ENCODE measurements at regions of chr1 and their contacts with region 1.

Region 1: DNA sequence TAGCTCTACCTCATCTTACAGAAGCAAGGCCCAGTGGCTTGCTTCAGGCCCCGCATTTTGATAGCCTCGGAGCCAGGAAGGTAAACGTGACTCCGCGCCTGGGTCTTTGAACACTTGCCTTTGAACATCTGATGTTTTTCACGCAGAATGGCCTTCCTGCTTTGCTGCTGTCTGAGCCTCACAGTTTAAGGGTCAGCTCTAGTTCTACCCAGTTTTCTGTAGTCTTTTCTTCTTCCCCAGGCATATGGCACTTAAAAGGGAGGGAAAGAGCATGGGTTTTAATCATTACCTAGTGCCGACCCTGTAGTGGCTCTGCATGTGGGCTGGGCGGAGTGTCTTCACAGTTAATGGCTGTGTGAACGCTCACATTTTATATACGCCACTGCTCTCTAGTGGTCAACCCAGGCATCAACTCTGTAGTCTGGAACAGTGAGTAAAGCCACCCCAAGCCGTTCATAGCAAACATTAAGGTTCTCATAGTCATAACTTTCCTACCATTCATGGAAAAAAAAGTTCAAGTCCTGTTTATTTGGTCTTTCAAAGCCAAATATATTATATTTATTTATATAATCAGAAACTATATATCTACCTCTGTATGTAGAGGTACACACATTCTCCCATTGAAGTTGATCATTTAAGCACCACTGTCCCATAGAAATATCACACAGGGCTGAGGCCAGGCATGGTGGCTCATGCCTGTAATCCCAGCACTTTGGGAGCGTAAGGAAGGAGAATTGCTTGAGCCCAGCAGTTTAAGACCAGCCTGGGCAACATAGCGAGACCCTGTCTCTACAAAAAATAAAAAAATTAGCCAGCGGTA is 78.1 kb downstream of the IER5 start:
- DNase-seq: peak in 1 of 2 donors; percentile 75
- ATAC-seq: peak; percentile 93 to 98 (median 96)
- H3K4me3 ChIP-seq: no peak overlapping the region
- H3K27ac ChIP-seq: no peak overlapping the region
- H3K4me1 ChIP-seq: peaks cover 0 to 7% (median 2%) of the 10 kb centered on the region in 9 donors
- H3K27me3 ChIP-seq: no peaks in the 10 kb centered on the region
- CTCF ChIP-seq: peak; percentile 84 to 93 (median 88)

Region 2: DNA sequence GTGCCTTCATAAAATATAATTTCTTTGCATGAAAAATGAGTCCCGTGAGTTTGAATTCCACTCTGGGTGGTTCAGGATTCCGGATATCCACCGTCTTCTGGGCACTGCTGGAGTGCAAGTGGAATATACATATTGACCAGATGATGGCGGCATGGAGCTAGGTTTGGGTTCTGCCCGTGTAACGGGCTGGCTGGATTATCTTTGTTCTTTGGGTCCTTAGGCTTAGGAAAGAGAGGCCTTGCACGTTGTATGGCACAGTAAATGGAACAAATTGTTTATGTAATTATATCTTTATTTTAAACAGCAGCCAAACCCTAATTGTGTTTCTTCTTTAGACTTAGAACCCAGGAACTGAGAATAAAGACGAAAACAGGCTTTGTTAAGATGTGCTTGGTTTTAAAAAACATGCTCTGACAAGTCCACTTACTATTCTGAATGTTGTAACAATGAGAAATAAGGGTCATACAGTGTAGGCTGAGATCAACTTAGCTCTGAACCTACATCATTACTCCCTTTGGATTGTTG is 650.7 kb before region 1 on chr1:
- intact Hi-C with region 1: loop called in 6 of 10 experiments (anchors 5 to 10 kb)
- DNase-seq: peak in 1 of 2 donors; percentile 72
- ATAC-seq: peak; percentile 91 to 97 (median 96)
- H3K4me3 ChIP-seq: no peak overlapping the region
- H3K27ac ChIP-seq: peak overlapping the region in 6 of 10 donors; percentile 16 to 36 (median 30)
- H3K4me1 ChIP-seq: peaks cover 0 to 31% (median 14%) of the 10 kb centered on the region in 9 donors
- H3K27me3 ChIP-seq: no peaks in the 10 kb centered on the region
- CTCF ChIP-seq: peak; percentile 67 to 92 (median 85)

Region 3: GRCh38 chr1:180527101-180527669 is 639.4 kb before region 1 on chr1:
- intact Hi-C with region 1: loop called in 3 of 10 experiments (anchors 5 to 10 kb)
- DNase-seq: no peak
- ATAC-seq: peak in 4 of 8 donors; percentile 27 to 41 (median 36)
- H3K4me3 ChIP-seq: no peak overlapping the region
- H3K27ac ChIP-seq: peak overlapping the region in 1 of 10 donors; percentile 22
- H3K4me1 ChIP-seq: peaks cover 0 to 57% (median 21%) of the 10 kb centered on the region in 9 donors
- H3K27me3 ChIP-seq: no peaks in the 10 kb centered on the region
- CTCF ChIP-seq: no peak

Region 4: GRCh38 chr1:180881806-180882509 is 284.6 kb before region 1 on chr1:
- intact Hi-C with region 1: loop called (anchors 1 to 10 kb)
- DNase-seq: no peak
- ATAC-seq: peak; percentile 47 to 69 (median 59)
- H3K4me3 ChIP-seq: no peak overlapping the region
- H3K27ac ChIP-seq: peak overlapping the region in 1 of 10 donors; percentile 2
- H3K4me1 ChIP-seq: peaks cover 0 to 19% (median 4%) of the 10 kb centered on the region in 9 donors
- H3K27me3 ChIP-seq: no peaks in the 10 kb centered on the region
- CTCF ChIP-seq: peak in 8 of 9 donors; percentile 36 to 70 (median 54)

Region 5: DNA sequence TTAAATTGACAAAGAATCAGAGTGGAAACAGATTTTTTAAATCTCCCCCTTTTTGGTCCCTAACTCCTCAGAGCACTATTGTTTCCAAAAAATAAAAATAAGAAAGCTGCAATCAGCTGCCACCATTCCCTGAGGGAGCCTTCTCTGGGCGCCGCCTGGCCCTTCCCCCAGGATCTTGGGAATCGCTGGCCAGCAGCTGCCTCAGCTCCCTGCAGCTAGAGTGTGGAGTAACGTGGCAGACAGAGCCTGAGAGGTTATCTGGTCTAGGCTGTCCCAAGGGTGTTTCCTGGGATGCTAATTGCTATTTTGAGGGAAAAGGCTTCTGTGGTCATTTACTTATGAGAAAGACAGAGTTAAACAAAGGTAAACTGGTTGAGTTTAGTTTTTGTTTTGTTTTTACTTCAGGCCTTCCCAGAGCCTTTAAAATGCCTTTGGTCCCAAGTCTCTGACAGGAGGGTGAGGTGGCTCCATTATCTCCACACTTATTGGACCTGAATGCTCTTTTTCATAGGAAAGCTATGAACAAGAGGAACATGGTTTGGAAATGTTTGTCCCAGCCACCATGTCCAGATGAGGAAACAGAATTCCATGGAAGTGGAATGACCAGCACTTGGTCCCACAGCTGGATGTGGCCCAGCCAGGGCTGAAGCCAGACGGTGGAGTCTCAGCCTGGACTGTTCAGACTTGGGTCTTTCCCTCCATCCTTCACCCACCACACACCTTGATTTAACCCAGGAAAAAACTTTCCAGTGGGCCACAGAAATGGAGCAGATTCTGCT is 268.0 kb before region 1 on chr1:
- intact Hi-C with region 1: loop called in 1 of 10 experiments (anchors 5 kb)
- DNase-seq: peak in 1 of 2 donors; percentile 42
- ATAC-seq: peak in 3 of 8 donors; percentile 35 to 66 (median 50)
- H3K4me3 ChIP-seq: no peak overlapping the region
- H3K27ac ChIP-seq: no peak overlapping the region
- H3K4me1 ChIP-seq: peaks cover 0 to 19% (median 0%) of the 10 kb centered on the region in 9 donors
- H3K27me3 ChIP-seq: no peaks in the 10 kb centered on the region
- CTCF ChIP-seq: no peak

Region 6: DNA sequence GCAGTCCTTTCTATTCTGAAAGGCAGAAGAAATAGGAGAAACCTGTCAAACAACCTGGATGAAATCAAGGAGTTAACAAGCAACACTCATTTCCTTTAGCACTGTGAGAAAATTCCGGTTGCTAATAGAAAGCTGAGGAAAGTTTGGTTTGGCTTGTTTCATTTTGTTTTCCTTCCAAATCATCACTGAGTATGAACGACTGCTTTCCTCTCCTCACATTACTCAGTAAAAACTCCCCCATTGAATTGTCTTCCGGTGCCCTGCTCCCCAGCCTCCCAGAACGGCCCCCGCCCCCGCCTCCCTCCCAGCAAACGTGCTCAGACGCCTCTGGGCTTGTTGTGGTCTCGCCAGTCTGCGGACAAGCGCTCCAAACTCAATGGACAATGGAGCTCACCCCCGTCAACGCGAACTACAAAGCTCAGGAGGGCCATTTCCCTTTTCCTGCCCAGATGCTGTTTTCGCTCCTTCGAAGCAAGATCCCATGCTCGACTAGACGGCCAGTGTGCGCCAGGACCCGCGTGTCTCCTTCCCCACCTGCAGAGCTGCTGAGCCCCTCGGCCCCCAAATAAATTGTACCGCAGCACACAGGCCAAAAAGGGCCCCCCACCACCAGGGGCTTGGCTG is 144.7 kb before region 1 on chr1:
- intact Hi-C with region 1: no loop called
- DNase-seq: peak; percentile 62 to 72
- ATAC-seq: peak; percentile 53 to 78 (median 68)
- H3K4me3 ChIP-seq: peak overlapping the region; percentile 61 to 100 (median 86)
- H3K27ac ChIP-seq: peak overlapping the region; percentile 56 to 96 (median 90)
- H3K4me1 ChIP-seq: peaks cover 2 to 40% (median 28%) of the 10 kb centered on the region in 9 donors
- H3K27me3 ChIP-seq: no peaks in the 10 kb centered on the region
- CTCF ChIP-seq: no peak

Region 7: GRCh38 chr1:181033799-181034451 is 132.7 kb before region 1 on chr1 and contains the start of gene MR1:
- intact Hi-C with region 1: loop called in 3 of 10 experiments (anchors 1 to 2 kb)
- DNase-seq: peak in 1 of 2 donors; percentile 45
- ATAC-seq: peak; percentile 81 to 97 (median 94)
- H3K4me3 ChIP-seq: peak within 1 kb of the TSS in 9 of 10 donors; percentile 41 to 68 (median 50)
- H3K27ac ChIP-seq: peak within 1 kb of the TSS; percentile 75 to 99 (median 84)
- H3K4me1 ChIP-seq: peaks cover 6 to 63% (median 19%) of the 10 kb centered on the region in 9 donors
- H3K27me3 ChIP-seq: no peaks in the 10 kb centered on the region
- CTCF ChIP-seq: no peak
- total RNA-seq, gene MR1: 1.8 to 8.2 (median 3.2) TPM

Region 8: DNA sequence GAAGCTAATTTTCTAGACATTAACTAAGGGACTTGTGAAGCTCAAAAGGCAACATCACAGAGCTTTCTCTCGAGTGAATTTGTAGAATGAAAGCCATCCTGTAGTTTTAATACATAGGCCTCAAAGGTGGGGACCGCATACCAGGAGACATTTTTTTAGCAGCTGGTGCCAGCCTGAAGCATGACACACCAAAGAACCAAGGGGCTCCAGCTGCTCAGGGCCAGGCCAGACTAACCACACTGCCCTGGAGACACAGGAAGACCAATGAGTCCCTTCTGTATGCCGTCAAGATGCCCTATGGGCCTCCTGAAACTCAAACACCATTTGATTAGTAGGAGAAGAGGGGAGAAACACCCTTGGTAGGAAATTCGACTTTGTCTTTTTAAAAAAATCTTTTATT is 202.8 kb after region 1 on chr1:
- intact Hi-C with region 1: no loop called
- DNase-seq: no peak
- ATAC-seq: no peak
- H3K4me3 ChIP-seq: no peak overlapping the region
- H3K27ac ChIP-seq: no peak overlapping the region
- H3K4me1 ChIP-seq: no peaks in the 10 kb centered on the region
- H3K27me3 ChIP-seq: peaks cover 0 to 2% (median 0%) of the 10 kb centered on the region in 7 donors
- CTCF ChIP-seq: no peak

Measured in heart right ventricle (tissue), 16 donors.